A673 (cell line): ENCODE measurements at regions of chr2 and their contacts with region 1.

Region 1: GRCh38 chr2:44964752-44965236 is 23.3 kb downstream of the SIX3 start:
- DNase-seq: peak; percentile 84
- H3K4me3 ChIP-seq: no peak overlapping the region
- H3K27ac ChIP-seq: no peak overlapping the region
- H3K4me1 ChIP-seq: peaks cover 21% of the 10 kb centered on the region
- H3K27me3 ChIP-seq: no peaks in the 10 kb centered on the region
- CTCF ChIP-seq: peak; percentile 44

Region 2: DNA sequence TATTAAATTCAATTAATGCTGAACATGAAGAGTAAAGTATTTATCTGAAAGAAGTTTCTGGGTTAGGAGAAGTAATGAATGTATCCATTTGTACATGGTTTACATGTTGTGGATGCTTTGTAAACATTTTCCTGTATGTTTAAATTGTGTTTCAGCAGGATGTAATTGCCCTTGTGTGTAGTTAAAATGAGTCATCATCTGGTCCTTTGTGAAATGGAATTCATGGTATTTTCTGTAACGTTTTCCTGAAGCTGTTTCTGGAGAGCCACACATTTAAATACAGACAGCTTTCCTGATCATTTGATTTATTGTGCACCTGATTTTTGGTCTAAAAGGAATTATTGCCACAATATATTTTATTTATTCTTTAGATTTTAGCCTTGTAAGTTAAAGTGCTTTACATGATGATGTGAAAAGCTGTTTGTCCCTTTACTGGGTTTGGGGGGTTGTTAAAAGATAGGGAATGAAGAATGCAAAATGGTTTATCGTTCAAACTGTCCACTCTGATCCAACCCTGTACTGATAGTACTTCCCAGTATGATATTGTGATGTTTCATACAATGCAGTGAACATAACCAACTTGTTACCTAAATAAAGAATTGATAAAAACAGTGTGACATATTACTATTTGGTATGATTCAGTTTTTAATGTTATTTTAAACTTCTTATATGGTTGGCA is 731.2 kb before region 1 on chr2:
- CTCF ChIA-PET with region 1: interaction called, 11 read pairs
- POLR2A ChIA-PET with region 1: no interaction called
- intact Hi-C with region 1: no loop called
- DNase-seq: peak; percentile 76
- H3K4me3 ChIP-seq: no peak overlapping the region
- H3K27ac ChIP-seq: no peak overlapping the region
- H3K4me1 ChIP-seq: peaks cover 17% of the 10 kb centered on the region
- H3K27me3 ChIP-seq: no peaks in the 10 kb centered on the region
- CTCF ChIP-seq: no peak